Naive thymus-derived CD8-positive, alpha-beta T cell (primary cell): ENCODE measurements at regions of chr2 and their contacts with region 1.

Region 1: GRCh38 chr2:170928824-170929685 is at the start of gene GORASP2:
- DNase-seq: peak; percentile 94 to 99 (median 98)
- ATAC-seq: peak; percentile 90 to 91
- H3K4me3 Mint-ChIP-seq: peak within 1 kb of the TSS; percentile 93 to 99 (median 96)
- H3K27ac Mint-ChIP-seq: peak within 1 kb of the TSS; percentile 93 to 99 (median 95)
- H3K4me1 Mint-ChIP-seq: peaks cover 15 to 47% (median 43%) of the 10 kb centered on the region in 4 donors
- H3K27me3 Mint-ChIP-seq: no peaks in the 10 kb centered on the region
- polyA plus RNA-seq, gene GORASP2: 70.1 to 91.9 (median 89.2) TPM

Region 2: GRCh38 chr2:170895023-170895757 is 33.9 kb before region 1 on chr2:
- POLR2A ChIA-PET with region 1: no interaction called
- DNase-seq: no peak
- ATAC-seq: no peak
- H3K4me3 Mint-ChIP-seq: no peak overlapping the region
- H3K27ac Mint-ChIP-seq: no peak overlapping the region
- H3K4me1 Mint-ChIP-seq: no peaks in the 10 kb centered on the region
- H3K27me3 Mint-ChIP-seq: peaks cover 0 to 22% (median 12%) of the 10 kb centered on the region in 5 donors

Region 3: DNA sequence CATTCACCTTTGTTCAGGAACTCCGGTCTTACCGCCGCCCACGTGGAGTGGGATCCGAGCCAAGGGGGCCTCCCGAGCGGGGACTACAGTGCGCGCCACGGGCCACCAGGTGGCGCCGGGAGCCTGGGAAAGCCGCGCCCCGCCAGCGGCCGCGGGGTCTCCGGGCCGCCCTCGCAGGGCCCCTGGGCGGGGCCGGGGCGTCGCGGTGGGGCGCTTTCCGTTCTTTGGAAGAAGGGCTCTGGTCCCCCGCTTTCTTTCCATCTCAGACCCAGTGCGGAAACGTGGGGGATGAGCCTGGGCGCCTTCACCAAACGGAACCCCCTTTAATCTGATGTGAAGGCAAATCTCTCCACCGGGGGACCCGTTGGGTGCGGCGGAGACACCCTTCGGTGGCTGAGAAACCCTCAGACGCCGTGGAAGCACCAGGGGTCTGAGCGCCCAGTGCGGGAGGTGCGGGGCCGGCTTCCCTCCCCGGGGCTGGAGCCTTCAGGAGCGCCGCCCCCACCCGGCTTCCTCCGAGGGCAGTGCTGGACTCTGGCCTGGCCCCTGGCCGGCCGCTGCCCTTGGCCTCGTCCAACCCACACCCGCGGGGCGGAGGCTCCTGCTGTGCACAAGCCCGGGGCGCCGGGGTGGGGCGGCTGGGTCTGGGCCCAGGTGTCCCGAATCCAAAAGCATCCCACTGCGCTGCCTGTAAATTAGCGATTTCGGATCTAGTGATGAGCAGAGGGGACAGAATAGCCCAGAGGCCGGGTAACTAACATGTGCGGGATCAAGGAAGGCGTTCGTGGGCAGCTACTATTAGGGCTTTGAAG is 44.6 kb after region 1 on chr2:
- POLR2A ChIA-PET with region 1: interaction called, 12 read pairs
- DNase-seq: peak; percentile 81 to 94 (median 91)
- ATAC-seq: peak; percentile 89 to 96
- H3K4me3 Mint-ChIP-seq: peak overlapping the region; percentile 71 to 89 (median 83)
- H3K27ac Mint-ChIP-seq: peak overlapping the region in 9 of 10 donors; percentile 54 to 90 (median 86)
- H3K4me1 Mint-ChIP-seq: peaks cover 4 to 10% (median 8%) of the 10 kb centered on the region in 4 donors
- H3K27me3 Mint-ChIP-seq: no peaks in the 10 kb centered on the region

Region 4: DNA sequence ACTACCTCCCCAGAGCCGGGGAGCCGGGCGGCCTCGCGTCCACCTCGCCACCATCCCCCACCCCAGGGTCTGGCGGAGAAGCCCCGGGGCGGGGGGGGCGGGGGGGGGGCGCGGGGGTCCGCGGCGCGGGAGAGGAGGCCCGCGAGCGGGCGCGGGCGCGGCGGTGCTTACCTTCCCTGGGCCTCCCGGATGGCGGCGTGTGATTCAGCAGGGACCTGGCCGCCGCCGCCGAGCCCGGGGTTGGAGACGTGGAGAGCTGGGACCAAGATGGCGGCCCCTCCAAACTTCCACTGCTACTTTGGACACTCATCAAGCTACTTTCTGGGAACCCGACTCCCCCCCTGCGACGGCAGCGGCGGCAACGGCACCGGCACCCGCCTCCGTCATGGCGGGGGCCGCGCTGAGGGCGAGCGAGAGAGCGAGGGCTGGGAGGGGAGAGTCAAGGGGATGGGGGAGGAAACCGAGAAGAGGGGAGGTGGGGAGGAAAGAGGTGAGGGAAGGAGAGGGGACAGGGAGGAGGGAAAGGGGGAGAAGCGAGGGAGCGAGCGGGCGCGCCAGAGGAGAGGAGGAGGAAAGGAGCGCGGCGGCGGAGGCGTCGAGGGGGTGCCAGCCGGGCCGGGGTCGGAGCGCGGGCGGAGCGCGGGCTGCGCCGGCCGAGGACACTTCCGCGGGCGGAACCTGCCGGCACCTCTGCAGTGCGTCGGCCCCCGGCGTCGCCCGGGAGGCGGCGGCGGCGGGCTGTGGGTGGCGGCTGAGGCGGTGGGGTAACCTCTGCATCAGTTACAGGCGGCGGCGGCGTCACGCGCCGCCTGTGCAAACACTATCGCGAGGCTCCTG is 231.3 kb after region 1 on chr2 and contains the start of gene TLK1:
- POLR2A ChIA-PET with region 1: interaction called, 32 read pairs
- DNase-seq: peak; percentile 62 to 87 (median 72)
- ATAC-seq: peak; percentile 66 to 75
- H3K4me3 Mint-ChIP-seq: peak within 1 kb of the TSS; percentile 91 to 98 (median 96)
- H3K27ac Mint-ChIP-seq: peak within 1 kb of the TSS; percentile 88 to 99 (median 97)
- H3K4me1 Mint-ChIP-seq: peaks cover 29 to 71% (median 60%) of the 10 kb centered on the region in 4 donors
- H3K27me3 Mint-ChIP-seq: no peaks in the 10 kb centered on the region
- polyA plus RNA-seq, gene TLK1: 27.3 to 53.7 (median 34.3) TPM

Region 5: DNA sequence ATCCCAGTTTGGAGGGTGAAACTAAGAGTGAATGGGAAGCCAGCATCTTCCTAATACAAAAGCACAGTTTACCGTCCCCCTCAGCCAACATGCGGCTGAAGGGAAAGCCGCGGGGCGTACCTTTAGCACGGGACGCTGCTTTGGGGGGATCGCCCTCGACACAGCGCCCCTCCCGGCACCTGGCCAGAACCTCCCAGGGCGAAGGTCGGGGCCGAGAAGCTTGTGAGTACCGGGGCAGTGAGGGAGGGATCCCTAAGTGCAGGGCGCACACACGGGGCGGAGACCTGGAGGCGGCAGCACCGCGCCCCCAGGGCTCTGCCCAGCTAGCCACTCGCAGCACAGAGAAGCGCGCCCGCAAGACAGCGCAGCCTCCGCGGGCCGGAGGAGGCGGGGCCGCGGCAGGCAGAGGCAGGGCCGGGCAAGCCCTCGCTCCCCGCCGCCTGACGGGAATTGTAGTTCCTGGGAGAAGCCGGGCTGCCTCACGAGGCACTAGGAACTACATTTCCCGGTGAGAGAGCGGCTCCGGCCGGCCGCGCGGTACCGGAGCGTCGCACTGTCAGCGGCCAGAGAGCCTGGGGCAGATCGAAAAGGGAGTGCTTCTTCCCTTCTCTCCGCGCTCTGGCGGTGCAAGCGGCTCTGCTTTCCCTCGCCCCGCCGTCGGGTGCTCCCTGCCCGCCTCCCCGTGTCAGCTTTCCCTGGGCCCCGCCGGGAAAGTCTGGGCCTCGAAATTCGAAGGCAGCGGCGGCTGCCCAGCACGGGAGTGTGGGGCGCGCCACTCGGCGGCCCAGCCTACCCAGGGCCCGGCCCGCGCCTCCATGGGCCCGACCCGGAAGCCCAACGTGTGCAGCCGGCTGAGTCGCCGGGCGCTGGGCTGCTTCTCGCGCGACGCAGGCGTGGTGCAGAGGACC is 505.0 kb after region 1 on chr2 and contains the starts of genes DCAF17 and METTL8:
- POLR2A ChIA-PET with region 1: interaction called, 41 read pairs
- DNase-seq: peak; percentile 87 to 96 (median 92)
- ATAC-seq: peak; percentile 88 to 91
- H3K4me3 Mint-ChIP-seq: peak within 1 kb of the TSS; percentile 87 to 94 (median 90)
- H3K27ac Mint-ChIP-seq: peak within 1 kb of the TSS; percentile 87 to 98 (median 96)
- H3K4me1 Mint-ChIP-seq: peaks cover 18 to 46% (median 40%) of the 10 kb centered on the region in 4 donors
- H3K27me3 Mint-ChIP-seq: no peaks in the 10 kb centered on the region
- polyA plus RNA-seq, gene DCAF17: 14.3 to 18.5 (median 14.9) TPM
- polyA plus RNA-seq, gene METTL8: 9.1 to 20.6 (median 10.6) TPM